Activated T-helper 1 cell treated with anti-CD3 and anti-CD28 coated beads, Interleukin-12 subunit alpha, Interleukin-12 subunit beta, Interleukin-2, Interleukin-4 antibody, amounts not matched to agents 30 ng/mL and 10 ng/mL and 1 ng/mL, durations not matched to agents 14 hours and 24 hours and 36 hours (primary cell): ENCODE measurements at regions of chr17 and their contacts with region 1.

Region 1: GRCh38 chr17:40026816-40027613 is 11.8 kb downstream of the CSF3 start:
- DNase-seq: peak; percentile 57
- H3K4me3 Mint-ChIP-seq: no peak overlapping the region
- H3K27ac Mint-ChIP-seq: no peak overlapping the region
- H3K4me1 Mint-ChIP-seq: peaks cover 18% of the 10 kb centered on the region
- H3K27me3 Mint-ChIP-seq: no peaks in the 10 kb centered on the region

Region 2: GRCh38 chr17:39963829-39964228 is 63.2 kb before region 1 on chr17:
- intact Hi-C with region 1: loop called (anchors 1 kb)
- DNase-seq: no peak
- H3K4me3 Mint-ChIP-seq: no peak overlapping the region
- H3K27ac Mint-ChIP-seq: peak overlapping the region; percentile 25
- H3K4me1 Mint-ChIP-seq: peaks cover 35% of the 10 kb centered on the region
- H3K27me3 Mint-ChIP-seq: peaks cover 7% of the 10 kb centered on the region